Mammary epithelial cell (primary cell): ENCODE measurements at regions of chr14 and their contacts with region 1.

Region 1: GRCh38 chr14:32252030-32252670 is 49.1 kb upstream of the RNU6-8 start:
- DNase-seq: peak; percentile 56
- H3K4me3 ChIP-seq: no peak overlapping the region
- H3K27ac ChIP-seq: no peak overlapping the region
- H3K4me1 ChIP-seq: peaks cover 11% of the 10 kb centered on the region
- H3K27me3 ChIP-seq: no peaks in the 10 kb centered on the region
- CTCF ChIP-seq: peak; percentile 90 to 95

Region 2: GRCh38 chr14:31510222-31510621 is 741.9 kb before region 1 on chr14:
- CTCF ChIA-PET with region 1: no interaction called
- dilution Hi-C with region 1: no loop called
- in situ Hi-C with region 1: loop called (anchors 10 to 25 kb)
- intact Hi-C with region 1: loop called (anchors 1 kb)
- DNase-seq: peak; percentile 20
- H3K4me3 ChIP-seq: no peak overlapping the region
- H3K27ac ChIP-seq: no peak overlapping the region
- H3K4me1 ChIP-seq: no peaks in the 10 kb centered on the region
- H3K27me3 ChIP-seq: no peaks in the 10 kb centered on the region
- CTCF ChIP-seq: peak; percentile 33 to 46

Region 3: GRCh38 chr14:31945074-31945613 is 307.0 kb before region 1 on chr14:
- CTCF ChIA-PET with region 1: no interaction called
- dilution Hi-C with region 1: no loop called
- in situ Hi-C with region 1: loop called in 1 of 2 experiments (anchors 10 kb)
- intact Hi-C with region 1: no loop called
- DNase-seq: no peak
- H3K4me3 ChIP-seq: no peak overlapping the region
- H3K27ac ChIP-seq: peak overlapping the region; percentile 4
- H3K4me1 ChIP-seq: peaks cover 58% of the 10 kb centered on the region
- H3K27me3 ChIP-seq: no peaks in the 10 kb centered on the region
- CTCF ChIP-seq: no peak

Region 4: DNA sequence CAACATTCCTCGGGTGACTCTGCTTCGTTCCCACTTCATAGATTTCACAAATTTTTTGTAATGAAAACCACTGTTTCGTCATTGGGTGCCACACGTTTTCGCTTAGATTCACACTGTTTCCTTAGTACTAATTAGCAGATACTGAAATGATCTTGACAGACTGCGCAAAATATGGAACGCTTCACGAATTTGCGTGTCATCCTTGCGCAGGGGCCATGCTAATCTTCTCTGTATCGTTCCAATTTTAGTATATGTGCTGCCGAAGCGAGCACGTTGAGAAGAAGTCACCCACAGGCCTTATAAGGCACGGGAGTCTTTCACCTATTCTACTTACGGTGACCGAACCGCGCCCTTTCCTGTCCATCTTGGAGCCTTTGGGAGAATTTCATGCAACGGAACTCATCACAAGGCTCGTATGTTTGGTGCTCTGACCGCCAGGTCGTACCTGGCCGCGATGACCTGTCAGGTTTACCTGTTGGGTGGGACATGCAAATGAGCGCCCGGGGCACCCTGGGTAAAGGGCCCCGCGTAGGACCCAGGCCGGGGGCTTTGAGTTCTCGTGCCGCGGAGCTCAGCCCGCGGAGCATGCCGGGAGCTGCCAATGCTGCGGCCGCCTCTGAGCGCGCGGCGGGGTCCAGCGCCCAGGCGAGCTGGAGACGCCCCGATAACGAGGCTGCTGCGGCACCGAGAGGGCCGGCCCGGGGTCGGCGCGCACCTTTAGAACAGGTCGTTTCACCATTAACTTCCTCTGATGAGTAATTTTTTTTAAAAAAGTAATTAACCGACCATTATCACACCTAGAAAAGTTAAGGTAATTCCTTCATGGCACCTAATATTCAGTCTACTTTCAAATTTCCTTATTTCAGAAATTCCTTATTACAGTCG is 48.9 kb before region 1 on chr14 and contains the start of gene RNU6-8:
- CTCF ChIA-PET with region 1: no interaction called
- dilution Hi-C with region 1: no loop called
- in situ Hi-C with region 1: no loop called
- intact Hi-C with region 1: loop called (anchors 5 kb)
- DNase-seq: peak; percentile 79
- H3K4me3 ChIP-seq: peak within 1 kb of the TSS; percentile 68 to 74 (median 74)
- H3K27ac ChIP-seq: peak within 1 kb of the TSS; percentile 91
- H3K4me1 ChIP-seq: peaks cover 38% of the 10 kb centered on the region
- H3K27me3 ChIP-seq: no peaks in the 10 kb centered on the region
- CTCF ChIP-seq: no peak
- total RNA-seq, gene RNU6-8: not detected

Region 5: DNA sequence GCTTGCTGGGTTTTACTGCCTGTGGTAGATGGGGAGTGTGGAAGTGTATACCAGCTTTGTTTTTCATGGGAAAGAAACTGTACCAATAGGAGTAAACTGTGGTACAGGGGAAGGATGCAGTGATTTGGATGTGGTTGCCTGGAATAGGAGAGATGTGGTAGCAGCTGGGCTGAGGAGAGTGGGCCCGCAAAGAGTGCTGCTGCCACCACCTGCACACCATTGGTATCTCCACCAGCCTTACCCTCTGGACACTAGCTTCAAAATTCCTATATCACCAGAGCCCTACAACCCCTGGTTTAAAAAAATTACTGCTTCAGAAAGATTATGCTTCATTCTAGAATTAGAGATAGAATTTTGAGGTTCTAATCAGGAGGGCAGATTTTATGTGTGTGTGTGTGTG is 130.6 kb after region 1 on chr14:
- CTCF ChIA-PET with region 1: interaction called, 23 read pairs
- dilution Hi-C with region 1: no loop called
- in situ Hi-C with region 1: loop called in 1 of 2 experiments (anchors 10 kb)
- intact Hi-C with region 1: loop called (anchors 1 kb)
- DNase-seq: peak; percentile 41
- H3K4me3 ChIP-seq: no peak overlapping the region
- H3K27ac ChIP-seq: no peak overlapping the region
- H3K4me1 ChIP-seq: peaks cover 9% of the 10 kb centered on the region
- H3K27me3 ChIP-seq: no peaks in the 10 kb centered on the region
- CTCF ChIP-seq: peak; percentile 65 to 88

Region 6: GRCh38 chr14:32560209-32560857 is 308.2 kb after region 1 on chr14:
- CTCF ChIA-PET with region 1: no interaction called
- dilution Hi-C with region 1: no loop called
- in situ Hi-C with region 1: no loop called
- intact Hi-C with region 1: loop called (anchors 1 kb)
- DNase-seq: peak; percentile 74
- H3K4me3 ChIP-seq: no peak overlapping the region
- H3K27ac ChIP-seq: peak overlapping the region; percentile 53
- H3K4me1 ChIP-seq: peaks cover 19% of the 10 kb centered on the region
- H3K27me3 ChIP-seq: no peaks in the 10 kb centered on the region
- CTCF ChIP-seq: peak; percentile 84 to 98